ENCODE measurements at regions of chr16 and their contacts with region 1.

Region 1: DNA sequence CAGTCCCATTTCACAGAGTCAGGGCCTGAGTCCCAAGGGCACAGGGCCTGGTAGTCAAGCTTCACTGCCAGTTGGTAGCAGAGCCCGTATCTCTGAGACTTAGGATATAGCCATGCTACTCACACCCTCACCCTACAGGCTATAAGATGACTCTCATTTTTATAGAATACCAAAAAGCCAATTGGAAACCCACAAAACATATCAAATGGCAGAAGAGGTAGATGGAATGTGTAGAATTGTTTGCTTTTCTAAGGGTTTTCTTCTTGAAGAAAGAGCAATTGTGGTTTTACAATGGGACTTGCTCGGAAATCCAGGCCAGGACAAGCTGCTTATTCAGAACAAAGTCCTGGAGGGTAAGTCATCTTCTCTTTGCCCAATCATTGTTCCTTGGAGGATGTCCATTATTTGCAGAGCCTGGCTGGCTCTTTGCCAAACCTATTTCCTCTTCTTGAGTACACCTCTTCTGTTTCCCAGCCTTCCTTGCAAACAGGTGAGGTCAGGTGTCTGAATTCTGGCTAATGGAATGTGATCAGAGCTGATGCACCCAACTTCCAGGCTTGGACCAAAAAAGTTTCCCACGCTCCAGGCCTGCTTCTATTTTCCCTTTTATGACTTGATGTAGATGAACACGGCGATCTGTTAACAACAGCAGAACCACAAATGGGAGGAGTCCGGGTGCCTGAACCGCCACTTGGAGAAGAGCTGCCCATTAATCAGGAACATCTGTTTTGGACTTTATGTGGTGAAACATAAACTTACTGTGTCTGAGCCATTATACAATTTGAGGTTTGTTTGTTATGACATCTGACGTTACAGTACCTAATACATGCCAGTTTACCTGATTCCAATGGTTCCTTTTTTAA is 16.9 kb upstream of the CCL22 start:
- DNase-seq: peak; percentile 100
- H3K4me3 ChIP-seq: no peak overlapping the region
- H3K27ac ChIP-seq: peak overlapping the region; percentile 50
- H3K4me1 ChIP-seq: peaks cover 28% of the 10 kb centered on the region
- H3K27me3 ChIP-seq: no peaks in the 10 kb centered on the region
- CTCF ChIP-seq: no peak

Region 2: DNA sequence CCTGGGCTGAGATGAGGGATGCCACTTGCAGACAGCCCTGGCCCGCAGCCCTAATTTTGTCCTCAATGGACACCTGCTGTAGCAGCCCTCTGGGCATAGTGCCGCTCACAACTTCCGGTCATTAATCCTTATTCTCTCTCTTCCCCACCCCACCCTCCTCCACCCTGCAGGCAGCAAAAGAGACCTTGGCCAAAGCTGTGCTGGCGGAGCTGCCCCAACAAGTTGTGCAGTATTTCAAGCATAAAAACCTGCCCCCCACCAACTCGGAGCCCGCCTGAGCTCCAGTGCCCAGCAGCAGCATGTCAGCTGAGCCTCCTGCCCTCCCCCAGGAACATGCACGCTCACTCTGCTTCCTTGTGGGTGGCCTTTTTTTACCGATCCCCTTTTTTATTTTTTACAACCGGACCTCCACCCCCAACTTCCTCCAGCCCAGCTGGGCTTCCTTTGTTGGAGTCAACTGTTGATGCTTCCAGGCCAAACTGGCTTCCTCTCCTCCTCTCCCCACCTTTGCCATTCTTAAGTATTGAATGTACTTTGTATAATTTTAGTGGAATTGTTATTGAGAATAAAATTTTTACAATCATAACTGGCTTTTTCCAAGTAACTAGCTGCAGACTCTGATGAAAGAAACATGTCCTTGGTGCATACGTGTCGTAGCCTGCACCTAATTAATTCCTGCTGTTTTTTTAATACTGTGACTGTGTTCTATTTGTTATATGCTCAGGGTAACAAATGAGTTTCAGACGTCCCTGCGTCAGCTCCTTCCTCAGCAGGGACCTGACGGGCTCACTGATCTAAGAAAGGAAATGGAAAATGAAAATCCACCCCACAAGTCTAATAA is 194.1 kb before region 1 on chr16:
- CTCF ChIA-PET with region 1: no interaction called
- dilution Hi-C with region 1: no loop called
- in situ Hi-C with region 1: no loop called
- intact Hi-C with region 1: no loop called
- DNase-seq: no peak
- H3K4me3 ChIP-seq: no peak overlapping the region
- H3K27ac ChIP-seq: no peak overlapping the region
- H3K4me1 ChIP-seq: peaks cover 8% of the 10 kb centered on the region
- H3K27me3 ChIP-seq: no peaks in the 10 kb centered on the region
- CTCF ChIP-seq: no peak

Region 3: DNA sequence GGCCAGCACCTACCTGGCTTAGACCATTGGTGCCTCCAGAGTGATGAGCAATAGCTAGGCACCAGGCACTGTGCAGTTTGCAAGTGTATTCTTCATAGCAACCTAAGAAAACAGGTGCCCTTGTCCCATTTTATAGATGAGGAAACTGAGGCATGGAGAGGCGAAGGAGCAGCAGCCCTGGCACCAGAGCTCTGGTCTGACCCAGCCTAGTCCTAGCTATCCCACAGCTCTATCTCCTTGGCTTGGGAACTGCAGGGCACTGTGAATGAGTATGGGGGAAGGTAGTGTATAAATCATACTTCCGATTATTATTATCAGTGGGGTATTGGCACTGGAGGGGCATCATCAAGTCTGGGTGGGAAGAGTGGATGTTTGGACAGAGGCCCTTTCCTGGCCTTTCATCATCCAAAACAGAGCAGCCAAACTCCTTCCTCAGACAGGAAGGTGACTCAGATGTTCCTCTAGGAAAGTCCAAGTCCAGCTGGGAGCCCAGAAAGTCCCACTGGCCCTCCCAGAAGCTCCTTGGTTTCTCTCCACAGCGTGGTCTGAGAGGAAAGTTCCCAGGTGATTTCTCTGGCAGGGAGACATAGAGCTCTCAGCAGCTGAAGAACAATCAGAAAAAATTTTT is 25.2 kb before region 1 on chr16:
- CTCF ChIA-PET with region 1: interaction called, 14 read pairs
- dilution Hi-C with region 1: no loop called
- in situ Hi-C with region 1: no loop called
- intact Hi-C with region 1: loop called (anchors 2 kb)
- DNase-seq: peak; percentile 83
- H3K4me3 ChIP-seq: no peak overlapping the region
- H3K27ac ChIP-seq: peak overlapping the region; percentile 55
- H3K4me1 ChIP-seq: peaks cover 23% of the 10 kb centered on the region
- H3K27me3 ChIP-seq: no peaks in the 10 kb centered on the region
- CTCF ChIP-seq: no peak

Region 4: GRCh38 chr16:57367116-57367752 is 25.6 kb after region 1 on chr16:
- CTCF ChIA-PET with region 1: no interaction called
- dilution Hi-C with region 1: no loop called
- in situ Hi-C with region 1: no loop called
- intact Hi-C with region 1: no loop called
- DNase-seq: peak; percentile 52
- H3K4me3 ChIP-seq: no peak overlapping the region
- H3K27ac ChIP-seq: no peak overlapping the region
- H3K4me1 ChIP-seq: peaks cover 8% of the 10 kb centered on the region
- H3K27me3 ChIP-seq: no peaks in the 10 kb centered on the region
- CTCF ChIP-seq: no peak

Region 5: GRCh38 chr16:57403965-57404817 is 62.5 kb after region 1 on chr16 and contains the start of gene CCL17:
- CTCF ChIA-PET with region 1: no interaction called
- dilution Hi-C with region 1: loop called (anchors 5 kb)
- in situ Hi-C with region 1: no loop called
- intact Hi-C with region 1: no loop called
- DNase-seq: no peak
- H3K4me3 ChIP-seq: no peak within 1 kb of the TSS
- H3K27ac ChIP-seq: no peak within 1 kb of the TSS
- H3K4me1 ChIP-seq: no peaks in the 10 kb centered on the region
- H3K27me3 ChIP-seq: no peaks in the 10 kb centered on the region
- CTCF ChIP-seq: no peak
- total RNA-seq, gene CCL17: not detected